CD8-positive, alpha-beta T cell (primary cell): ENCODE measurements at regions of chr12 and their contacts with region 1.

Region 1: GRCh38 chr12:97200181-97200580 is 262.4 kb upstream of the RMST start:
- DNase-seq: no peak
- ATAC-seq: no peak
- H3K4me3 ChIP-seq: no peak overlapping the region
- H3K4me3 Mint-ChIP-seq: no peak overlapping the region
- H3K27ac ChIP-seq: no peak overlapping the region
- H3K27ac Mint-ChIP-seq: no peak overlapping the region
- H3K4me1 ChIP-seq: no peaks in the 10 kb centered on the region
- H3K4me1 Mint-ChIP-seq: no peaks in the 10 kb centered on the region
- H3K27me3 ChIP-seq: no peaks in the 10 kb centered on the region
- H3K27me3 Mint-ChIP-seq: peaks cover 12% of the 10 kb centered on the region
- CTCF ChIP-seq: no peak

Region 2: DNA sequence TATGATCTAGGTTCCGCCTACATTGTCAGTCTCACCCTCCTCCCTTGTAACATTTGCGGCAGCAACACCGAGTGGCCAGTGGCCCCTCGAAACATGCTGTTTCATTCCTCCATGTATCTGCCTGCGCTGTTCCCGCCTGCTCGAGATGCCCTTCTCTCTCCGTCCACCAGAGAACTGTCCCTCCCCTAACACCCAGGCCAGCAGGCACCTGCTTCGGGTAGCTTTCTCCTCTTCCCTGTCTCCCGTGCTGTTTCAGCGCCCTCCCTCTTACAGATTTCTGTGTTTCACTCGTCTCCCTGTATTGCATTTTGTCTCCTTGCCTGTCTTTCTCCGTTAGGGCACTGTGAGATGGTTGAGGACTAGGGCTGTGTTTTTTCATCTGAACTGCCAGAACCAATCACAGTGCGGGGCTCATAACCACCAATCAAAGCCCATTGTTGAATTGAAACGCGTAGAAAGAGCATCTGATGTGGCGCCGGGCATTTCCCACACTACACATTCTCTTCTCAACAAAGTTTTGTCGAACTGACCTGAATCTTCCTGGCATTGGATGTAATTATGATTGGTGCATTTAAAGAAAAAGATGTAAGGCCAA is 1047.0 kb before region 1 on chr12:
- CTCF ChIA-PET with region 1: no interaction called
- POLR2A ChIA-PET with region 1: no interaction called
- intact Hi-C with region 1: no loop called
- DNase-seq: no peak
- ATAC-seq: no peak
- H3K4me3 ChIP-seq: no peak overlapping the region
- H3K4me3 Mint-ChIP-seq: no peak overlapping the region
- H3K27ac ChIP-seq: no peak overlapping the region
- H3K27ac Mint-ChIP-seq: no peak overlapping the region
- H3K4me1 ChIP-seq: no peaks in the 10 kb centered on the region
- H3K4me1 Mint-ChIP-seq: no peaks in the 10 kb centered on the region
- H3K27me3 ChIP-seq: no peaks in the 10 kb centered on the region
- H3K27me3 Mint-ChIP-seq: no peaks in the 10 kb centered on the region
- CTCF ChIP-seq: no peak

Region 3: DNA sequence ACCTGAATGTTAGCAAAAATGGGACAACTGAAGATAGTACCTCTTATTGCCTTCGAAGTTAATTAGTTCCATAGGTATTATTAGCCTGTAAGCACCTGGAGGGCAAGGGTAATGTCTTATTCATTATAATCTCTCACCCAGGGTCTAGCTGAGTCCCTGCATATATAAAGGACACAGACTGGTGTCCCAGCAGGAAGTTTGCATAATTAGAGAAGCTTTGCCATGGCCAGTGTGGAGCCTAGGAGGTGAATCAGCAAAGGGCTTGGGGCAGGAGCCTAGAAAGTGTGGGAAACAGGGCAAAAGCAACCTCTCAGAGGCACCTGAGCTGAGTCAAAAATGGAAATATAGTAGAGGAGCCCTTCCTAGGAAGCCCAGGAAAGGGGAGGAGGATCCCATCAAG is 172.7 kb before region 1 on chr12:
- CTCF ChIA-PET with region 1: no interaction called
- POLR2A ChIA-PET with region 1: no interaction called
- intact Hi-C with region 1: no loop called
- DNase-seq: no peak
- ATAC-seq: no peak
- H3K4me3 ChIP-seq: no peak overlapping the region
- H3K4me3 Mint-ChIP-seq: no peak overlapping the region
- H3K27ac ChIP-seq: no peak overlapping the region
- H3K27ac Mint-ChIP-seq: no peak overlapping the region
- H3K4me1 ChIP-seq: no peaks in the 10 kb centered on the region
- H3K4me1 Mint-ChIP-seq: no peaks in the 10 kb centered on the region
- H3K27me3 ChIP-seq: no peaks in the 10 kb centered on the region
- H3K27me3 Mint-ChIP-seq: peaks cover 8% of the 10 kb centered on the region
- CTCF ChIP-seq: no peak

Region 4: DNA sequence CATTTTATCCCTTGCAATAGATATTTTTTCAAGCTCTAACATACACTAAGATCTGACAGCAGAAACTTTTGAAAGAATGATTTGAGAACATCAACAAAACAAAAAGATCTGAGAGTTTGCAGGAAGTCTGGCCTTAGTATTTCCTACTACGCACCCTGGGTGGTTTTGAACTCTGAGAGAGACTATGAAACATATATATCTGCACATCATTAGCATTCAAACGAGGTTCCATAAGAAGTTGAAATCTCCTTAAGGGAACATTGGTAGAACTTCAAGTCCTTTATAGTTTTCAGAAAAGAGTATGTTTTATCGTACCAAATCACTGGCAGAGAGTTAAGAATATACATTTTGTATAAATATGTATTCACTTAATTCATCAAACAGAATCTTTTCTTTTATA is 348.8 kb after region 1 on chr12:
- CTCF ChIA-PET with region 1: no interaction called
- POLR2A ChIA-PET with region 1: no interaction called
- intact Hi-C with region 1: loop called in 1 of 2 experiments (anchors 2 kb)
- DNase-seq: no peak
- ATAC-seq: no peak
- H3K4me3 ChIP-seq: no peak overlapping the region
- H3K4me3 Mint-ChIP-seq: no peak overlapping the region
- H3K27ac ChIP-seq: no peak overlapping the region
- H3K27ac Mint-ChIP-seq: no peak overlapping the region
- H3K4me1 ChIP-seq: no peaks in the 10 kb centered on the region
- H3K4me1 Mint-ChIP-seq: no peaks in the 10 kb centered on the region
- H3K27me3 ChIP-seq: no peaks in the 10 kb centered on the region
- H3K27me3 Mint-ChIP-seq: no peaks in the 10 kb centered on the region
- CTCF ChIP-seq: no peak